ENCODE measurements at regions of chr2 and their contacts with region 1.

Region 1: DNA sequence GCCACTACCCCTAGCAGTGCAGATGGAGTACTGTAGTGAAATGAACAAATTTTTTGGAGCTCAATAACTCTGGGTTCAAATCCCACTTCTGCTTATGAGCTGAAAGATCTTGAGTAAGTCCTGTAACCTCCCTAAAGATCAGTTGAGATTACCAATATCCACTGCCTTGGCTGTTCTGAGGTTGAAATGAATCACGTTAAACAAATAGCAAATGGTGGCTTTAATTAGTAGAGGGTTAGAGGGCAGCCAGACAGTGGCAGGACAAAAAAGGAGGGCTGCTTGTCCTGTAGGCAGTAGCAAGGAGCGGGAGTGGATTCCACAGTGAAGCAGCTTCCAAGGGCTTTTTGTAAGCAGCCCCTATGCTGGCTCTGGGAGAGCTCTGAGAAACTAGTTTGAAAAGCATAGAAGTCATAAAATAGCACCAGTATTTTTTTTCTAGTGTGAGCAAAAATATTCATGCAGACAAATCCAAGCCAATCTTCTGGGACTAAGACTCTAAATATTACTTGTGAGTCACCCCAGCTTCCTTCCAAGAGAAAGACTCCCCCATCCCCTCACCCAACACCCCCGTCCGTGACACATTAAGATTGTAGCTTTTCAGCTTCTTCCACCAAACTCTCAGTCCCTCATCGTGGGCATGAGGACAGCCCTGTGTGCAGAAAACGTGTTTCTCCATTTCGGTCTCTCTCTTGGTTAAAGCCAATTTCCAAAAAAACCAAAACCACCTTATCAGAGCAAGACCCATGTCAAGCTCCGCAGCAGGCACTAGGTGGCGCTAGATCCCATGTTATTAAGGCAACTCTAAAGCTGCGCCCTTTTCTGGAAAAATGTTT is 123.5 kb upstream of the LGALSL start:
- DNase-seq: peak; percentile 73 to 83 (median 77)
- ATAC-seq: peak; percentile 69
- H3K4me3 ChIP-seq: no peak overlapping the region
- H3K4me1 ChIP-seq: peaks cover 12% of the 10 kb centered on the region
- CTCF ChIP-seq: peak; percentile 84

Region 2: DNA sequence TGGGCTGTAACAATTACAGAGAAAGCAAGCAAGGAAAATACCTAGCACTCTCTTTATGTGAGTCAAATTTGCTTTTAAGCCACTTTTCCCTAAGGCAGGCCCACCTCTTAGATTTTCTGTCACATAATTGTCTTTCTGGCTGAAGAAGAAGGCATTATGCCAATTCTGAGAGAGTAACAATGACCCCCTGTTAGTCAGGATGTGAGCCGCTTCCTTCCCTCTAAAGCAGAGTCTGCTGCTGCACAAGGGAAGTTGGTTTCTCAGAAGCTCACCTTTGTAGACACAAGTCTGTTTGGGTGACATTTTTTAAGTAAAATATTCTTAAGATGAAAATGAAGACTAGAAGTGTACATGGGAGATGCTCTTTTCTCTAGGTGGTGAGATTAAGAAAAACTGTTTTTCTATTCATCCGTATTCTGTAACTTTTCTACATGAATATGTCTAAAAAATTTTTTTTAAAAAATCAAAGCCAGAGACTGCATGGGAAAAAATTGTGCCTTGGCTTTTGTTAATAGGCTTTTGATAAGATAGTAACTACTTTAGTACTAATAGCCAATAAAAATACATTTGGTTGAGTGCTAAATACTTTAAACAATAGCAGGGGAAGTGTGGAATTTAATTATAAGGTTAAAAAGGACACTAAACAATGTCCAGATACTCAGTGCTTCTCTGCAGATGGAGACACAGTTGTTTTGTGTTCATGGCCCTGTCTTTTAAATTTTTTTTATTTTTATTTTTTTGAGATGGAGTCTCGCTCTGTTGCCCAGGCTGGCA is 277.8 kb before region 1 on chr2:
- intact Hi-C with region 1: loop called in 1 of 2 experiments (anchors 5 kb)
- DNase-seq: no peak
- ATAC-seq: no peak
- H3K4me3 ChIP-seq: no peak overlapping the region
- H3K4me1 ChIP-seq: peaks cover 5% of the 10 kb centered on the region
- CTCF ChIP-seq: no peak

Region 3: GRCh38 chr2:64114063-64114911 is 216.2 kb before region 1 on chr2:
- intact Hi-C with region 1: no loop called
- DNase-seq: no peak
- ATAC-seq: peak; percentile 75
- H3K4me3 ChIP-seq: no peak overlapping the region
- H3K4me1 ChIP-seq: peaks cover 68% of the 10 kb centered on the region
- CTCF ChIP-seq: no peak

Region 4: DNA sequence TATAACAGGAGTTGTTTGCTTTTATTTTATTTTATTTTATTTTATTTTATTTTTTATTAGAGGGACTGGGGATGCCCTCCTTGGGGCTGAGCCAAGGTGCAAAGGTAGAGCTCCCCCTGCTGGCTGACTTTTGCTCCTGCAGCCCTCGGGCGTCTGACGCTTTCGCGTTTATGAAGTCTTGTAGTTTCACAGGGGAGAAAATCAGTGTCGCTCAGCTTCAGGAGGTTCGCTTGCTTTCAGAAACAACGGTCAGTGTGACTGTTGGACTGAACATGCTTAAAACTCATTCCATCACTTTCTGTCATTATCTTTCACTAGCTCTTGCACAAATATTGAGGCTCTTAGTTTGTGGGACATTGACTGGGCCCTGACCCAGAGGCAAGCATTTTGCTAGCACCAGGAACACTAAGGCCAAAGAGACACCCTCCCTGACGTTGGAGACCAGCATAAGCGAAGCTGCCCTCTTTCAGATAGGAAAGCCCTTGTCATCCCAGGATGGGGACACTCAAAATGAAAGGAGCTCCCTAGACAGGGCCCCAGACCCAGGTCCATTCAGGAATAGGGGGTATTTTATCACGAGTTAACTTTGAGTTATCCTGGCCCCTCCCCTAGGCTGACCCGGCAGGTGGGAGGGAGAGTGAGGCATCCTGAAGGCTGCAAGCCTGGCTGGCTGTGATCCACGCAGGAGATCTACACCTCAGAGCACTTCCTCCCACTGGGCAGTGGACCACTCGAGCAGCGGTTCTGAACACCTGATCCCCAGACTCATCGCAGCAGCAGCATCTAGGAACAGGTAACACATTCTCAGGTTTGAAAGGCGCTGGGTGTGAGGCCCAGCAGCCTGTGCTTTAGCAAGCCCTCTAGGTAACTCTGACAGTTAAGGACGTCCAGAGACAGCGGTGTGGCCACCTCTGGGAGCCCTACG is 157.8 kb after region 1 on chr2:
- intact Hi-C with region 1: loop called (anchors 5 kb)
- DNase-seq: peak; percentile 68 to 86 (median 84)
- ATAC-seq: peak; percentile 88
- H3K4me3 ChIP-seq: no peak overlapping the region
- H3K4me1 ChIP-seq: no peaks in the 10 kb centered on the region
- CTCF ChIP-seq: peak; percentile 93

Region 5: DNA sequence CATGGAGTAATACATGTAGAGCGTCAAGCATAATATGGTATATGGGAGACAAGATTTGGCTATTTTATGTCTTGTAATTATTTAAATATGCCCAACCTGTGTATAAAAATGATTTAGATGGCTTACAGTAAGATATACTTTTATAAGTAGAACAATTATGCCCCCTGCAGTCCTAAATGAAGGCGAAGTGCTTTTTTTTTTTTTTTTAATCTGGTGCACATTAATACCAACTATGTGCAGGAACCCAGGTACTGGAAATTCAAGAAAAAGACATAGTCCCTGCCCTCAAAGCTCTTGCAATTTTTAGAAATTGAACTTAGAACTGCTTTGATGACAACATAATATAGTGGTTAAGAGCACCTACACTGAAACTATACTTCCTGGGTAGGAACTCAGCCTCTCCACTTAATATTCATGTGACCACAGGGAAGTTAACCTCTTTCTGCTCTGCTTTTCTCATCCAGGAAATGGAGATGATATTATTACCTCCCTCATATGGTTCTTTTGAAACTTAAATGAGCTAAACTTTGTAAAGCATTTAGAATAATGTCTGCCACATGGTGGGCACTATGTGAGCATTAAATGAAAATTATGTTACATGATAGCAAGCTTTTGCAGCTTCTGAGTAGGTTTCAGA is 231.8 kb after region 1 on chr2:
- intact Hi-C with region 1: loop called in 1 of 2 experiments (anchors 10 kb)
- DNase-seq: no peak
- ATAC-seq: peak; percentile 58
- H3K4me3 ChIP-seq: no peak overlapping the region
- H3K4me1 ChIP-seq: peaks cover 5% of the 10 kb centered on the region
- CTCF ChIP-seq: no peak

Measured in mucosa of descending colon (tissue), 3 donors.